Natural killer cell (primary cell): ENCODE measurements at regions of chr5 and their contacts with region 1.

Region 1: GRCh38 chr5:149561848-149562247 is 10.6 kb upstream of the CSNK1A1 start:
- DNase-seq: no peak
- ATAC-seq: no peak
- H3K4me3 ChIP-seq: no peak overlapping the region
- H3K4me3 Mint-ChIP-seq: no peak overlapping the region
- H3K27ac ChIP-seq: no peak overlapping the region
- H3K27ac Mint-ChIP-seq: no peak overlapping the region
- H3K4me1 ChIP-seq: no peaks in the 10 kb centered on the region
- H3K4me1 Mint-ChIP-seq: no peaks in the 10 kb centered on the region
- H3K27me3 ChIP-seq: no peaks in the 10 kb centered on the region
- H3K27me3 Mint-ChIP-seq: no peaks in the 10 kb centered on the region
- CTCF ChIP-seq: no peak

Region 2: GRCh38 chr5:149141224-149141956 is 420.5 kb before region 1 on chr5 and contains the start of gene ABLIM3:
- intact Hi-C with region 1: loop called (anchors 5 kb)
- DNase-seq: peak; percentile 74 to 79
- ATAC-seq: peak; percentile 92 to 99 (median 98)
- H3K4me3 ChIP-seq: peak within 1 kb of the TSS; percentile 20
- H3K4me3 Mint-ChIP-seq: peak within 1 kb of the TSS; percentile 68
- H3K27ac ChIP-seq: no peak within 1 kb of the TSS
- H3K27ac Mint-ChIP-seq: no peak within 1 kb of the TSS
- H3K4me1 ChIP-seq: peaks cover 6% of the 10 kb centered on the region
- H3K4me1 Mint-ChIP-seq: peaks cover 0 to 4% of the 10 kb centered on the region in 2 donors
- H3K27me3 ChIP-seq: peaks cover 10% of the 10 kb centered on the region
- H3K27me3 Mint-ChIP-seq: peaks cover 40 to 58% of the 10 kb centered on the region in 2 donors
- CTCF ChIP-seq: peak; percentile 88
- total RNA-seq, gene ABLIM3: 0.41 to 2.4 (median 1.2) TPM

Region 3: GRCh38 chr5:149317281-149318048 is 244.4 kb before region 1 on chr5:
- intact Hi-C with region 1: loop called (anchors 1 kb)
- DNase-seq: peak in 1 of 2 donors; percentile 79
- ATAC-seq: peak in 2 of 3 donors; percentile 55 to 67
- H3K4me3 ChIP-seq: no peak overlapping the region
- H3K4me3 Mint-ChIP-seq: no peak overlapping the region
- H3K27ac ChIP-seq: no peak overlapping the region
- H3K27ac Mint-ChIP-seq: no peak overlapping the region
- H3K4me1 ChIP-seq: no peaks in the 10 kb centered on the region
- H3K4me1 Mint-ChIP-seq: no peaks in the 10 kb centered on the region
- H3K27me3 ChIP-seq: no peaks in the 10 kb centered on the region
- H3K27me3 Mint-ChIP-seq: peaks cover 0 to 2% of the 10 kb centered on the region in 2 donors
- CTCF ChIP-seq: peak; percentile 65

Region 4: GRCh38 chr5:149381987-149382340 is 179.9 kb before region 1 on chr5:
- intact Hi-C with region 1: loop called (anchors 1 kb)
- DNase-seq: peak; percentile 60 to 82
- ATAC-seq: peak; percentile 64 to 90 (median 82)
- H3K4me3 ChIP-seq: no peak overlapping the region
- H3K4me3 Mint-ChIP-seq: no peak overlapping the region
- H3K27ac ChIP-seq: no peak overlapping the region
- H3K27ac Mint-ChIP-seq: no peak overlapping the region
- H3K4me1 ChIP-seq: peaks cover 5% of the 10 kb centered on the region
- H3K4me1 Mint-ChIP-seq: peaks cover 0 to 4% of the 10 kb centered on the region in 2 donors
- H3K27me3 ChIP-seq: no peaks in the 10 kb centered on the region
- H3K27me3 Mint-ChIP-seq: no peaks in the 10 kb centered on the region
- CTCF ChIP-seq: peak; percentile 91

Region 5: DNA sequence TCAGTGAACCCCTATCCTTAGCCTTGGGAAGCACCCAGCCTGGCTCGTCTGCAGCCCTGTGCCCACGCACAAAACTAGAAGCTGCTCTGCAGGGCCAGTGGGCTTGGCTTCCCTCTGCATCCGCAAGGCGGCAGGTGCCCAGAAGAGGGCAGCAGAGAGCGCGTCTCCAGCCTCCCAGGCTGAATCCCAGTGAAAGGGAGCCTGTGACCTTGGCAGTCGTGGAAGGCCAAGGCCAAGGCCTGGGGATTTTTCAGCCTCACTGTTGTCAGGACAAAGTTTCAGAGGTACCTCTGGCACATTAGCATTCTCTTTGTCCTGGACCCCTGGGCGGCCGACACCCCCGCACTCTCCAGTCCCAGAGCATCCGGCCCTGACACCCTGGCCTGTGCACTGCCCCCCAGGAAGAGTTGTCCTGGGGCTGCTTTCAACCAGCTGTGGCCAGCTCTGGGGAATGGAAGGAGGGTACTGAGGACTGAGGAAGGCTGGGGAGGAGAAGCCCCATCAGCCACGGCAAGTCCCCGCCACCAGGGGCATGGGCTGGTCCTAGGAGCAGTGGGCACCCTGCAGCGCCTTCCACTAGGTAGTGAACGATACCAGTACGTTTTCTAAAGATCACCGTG is 119.2 kb before region 1 on chr5:
- intact Hi-C with region 1: loop called (anchors 1 kb)
- DNase-seq: peak; percentile 71 to 78
- ATAC-seq: peak; percentile 71 to 93 (median 89)
- H3K4me3 ChIP-seq: no peak overlapping the region
- H3K4me3 Mint-ChIP-seq: no peak overlapping the region
- H3K27ac ChIP-seq: no peak overlapping the region
- H3K27ac Mint-ChIP-seq: no peak overlapping the region
- H3K4me1 ChIP-seq: no peaks in the 10 kb centered on the region
- H3K4me1 Mint-ChIP-seq: no peaks in the 10 kb centered on the region
- H3K27me3 ChIP-seq: no peaks in the 10 kb centered on the region
- H3K27me3 Mint-ChIP-seq: peaks cover 0 to 5% of the 10 kb centered on the region in 2 donors
- CTCF ChIP-seq: peak; percentile 84

Region 6: GRCh38 chr5:149656576-149657182 is 94.8 kb after region 1 on chr5:
- intact Hi-C with region 1: no loop called
- DNase-seq: peak in 1 of 2 donors; percentile 20
- ATAC-seq: no peak
- H3K4me3 ChIP-seq: no peak overlapping the region
- H3K4me3 Mint-ChIP-seq: no peak overlapping the region
- H3K27ac ChIP-seq: no peak overlapping the region
- H3K27ac Mint-ChIP-seq: no peak overlapping the region
- H3K4me1 ChIP-seq: no peaks in the 10 kb centered on the region
- H3K4me1 Mint-ChIP-seq: peaks cover 0 to 12% of the 10 kb centered on the region in 2 donors
- H3K27me3 ChIP-seq: no peaks in the 10 kb centered on the region
- H3K27me3 Mint-ChIP-seq: peaks cover 6 to 8% of the 10 kb centered on the region in 2 donors
- CTCF ChIP-seq: peak; percentile 9